ENCODE measurements at regions of chr17 and their contacts with region 1.

Region 1: GRCh38 chr17:32971171-32971570 is 20.5 kb upstream of the SPACA3 start:
- DNase-seq: no peak
- ATAC-seq: no peak
- H3K4me3 ChIP-seq: no peak overlapping the region
- H3K27ac ChIP-seq: no peak overlapping the region
- H3K4me1 ChIP-seq: no peaks in the 10 kb centered on the region
- H3K27me3 ChIP-seq: no peaks in the 10 kb centered on the region
- CTCF ChIP-seq: no peak
- POLR2A ChIP-seq: no peak

Region 2: DNA sequence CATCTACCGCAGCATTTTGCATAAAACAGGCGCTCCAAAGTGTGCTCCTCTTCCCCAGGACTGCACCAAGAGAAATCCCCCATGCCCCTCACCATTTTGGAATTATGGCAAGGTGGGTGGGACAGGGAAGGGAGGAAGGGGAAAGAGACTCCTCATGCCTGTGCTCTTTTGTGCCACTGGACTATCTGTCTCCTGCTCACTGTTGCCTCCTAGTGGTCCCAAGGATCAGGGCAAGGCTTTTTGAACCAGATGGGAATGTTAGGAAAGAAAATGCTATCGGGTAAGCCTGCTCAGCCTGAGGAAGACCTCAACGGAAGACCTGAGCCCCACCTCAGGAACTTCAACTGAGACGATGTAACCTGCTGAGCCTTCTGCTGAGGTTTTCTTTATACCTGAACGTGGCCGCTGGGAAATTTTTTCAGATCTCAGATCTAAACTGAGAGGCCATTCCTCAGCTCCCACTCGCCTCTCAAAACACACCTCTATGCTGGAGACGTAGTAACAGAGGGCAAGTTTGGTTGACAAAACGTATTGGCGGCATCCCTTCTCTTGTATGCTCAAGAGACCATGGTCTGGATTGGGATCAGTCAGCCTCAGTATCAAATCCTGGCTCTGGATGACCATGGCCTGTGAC is 78.7 kb after region 1 on chr17:
- in situ Hi-C with region 1: loop called in 1 of 4 experiments (anchors 25 kb)
- intact Hi-C with region 1: no loop called
- DNase-seq: no peak
- ATAC-seq: no peak
- H3K4me3 ChIP-seq: no peak overlapping the region
- H3K27ac ChIP-seq: no peak overlapping the region
- H3K4me1 ChIP-seq: no peaks in the 10 kb centered on the region
- H3K27me3 ChIP-seq: no peaks in the 10 kb centered on the region
- CTCF ChIP-seq: peak in 4 of 5 experiments; percentile 11 to 62 (median 52)
- POLR2A ChIP-seq: no peak

Measured in gastrocnemius medialis (tissue), 4 donors.